HCT116 (cell line): ENCODE measurements at regions of chr20 and their contacts with region 1.

Region 1: GRCh38 chr20:49690899-49691620 is 22.6 kb downstream of the B4GALT5 start:
- DNase-seq: peak; percentile 73
- ATAC-seq: peak; percentile 77
- H3K4me3 ChIP-seq: no peak overlapping the region; a peak in 1 of 4 replicates
- H3K27ac ChIP-seq: peak overlapping the region; percentile 71
- H3K4me1 ChIP-seq: peaks cover 98 to 99% of the 10 kb centered on the region in 2 experiments
- H3K27me3 ChIP-seq: no peaks in the 10 kb centered on the region
- CTCF ChIP-seq: no peak
- POLR2A ChIP-seq: no peak
- RAD21 ChIP-seq: no peak

Region 2: DNA sequence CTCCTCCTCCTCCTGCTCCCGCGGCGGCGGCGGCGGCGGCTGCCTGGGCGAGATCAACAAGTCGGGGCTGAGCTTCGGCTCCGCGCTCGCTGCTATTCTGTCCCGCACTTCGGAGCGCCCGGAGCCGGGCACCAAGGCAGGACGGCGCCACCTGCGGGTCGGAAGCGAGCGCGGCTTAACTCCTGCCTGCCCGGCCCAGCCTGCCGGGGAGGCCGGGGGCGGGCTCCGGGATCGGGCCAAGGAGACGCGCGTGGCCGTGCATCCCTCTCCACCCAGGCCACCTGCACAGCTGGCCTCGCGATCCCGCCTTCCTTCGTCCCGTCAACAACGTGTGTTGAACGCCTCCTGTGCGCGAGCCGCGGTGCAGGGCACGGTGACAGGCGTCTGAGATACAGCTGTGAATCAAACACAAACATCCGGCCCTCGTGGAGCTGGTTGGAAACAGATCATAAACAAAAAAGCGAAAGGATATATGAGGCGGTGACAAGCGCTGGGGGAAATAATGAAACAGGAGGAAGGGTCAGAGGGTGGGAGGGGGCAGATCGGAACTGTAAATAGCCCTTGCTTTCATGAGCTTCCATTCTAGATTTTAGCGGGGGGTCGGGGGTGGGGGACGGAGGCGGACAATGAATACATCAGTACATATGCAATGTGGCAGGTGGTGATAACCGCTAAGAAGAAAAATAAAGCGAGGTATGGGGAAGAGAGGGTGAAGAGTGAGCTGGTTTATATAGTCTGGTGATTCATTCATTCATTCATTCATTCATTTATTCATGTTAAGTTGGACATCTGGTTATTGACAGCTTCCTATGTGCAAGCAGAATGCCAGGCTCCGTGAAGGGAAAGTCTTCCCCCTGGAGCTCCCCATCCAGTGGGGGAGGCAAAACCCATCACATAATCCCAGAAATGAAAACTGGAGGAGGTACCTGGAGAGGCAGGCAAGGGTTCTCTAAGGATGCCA is 206.6 kb before region 1 on chr20:
- CTCF ChIA-PET with region 1: no interaction called
- POLR2A ChIA-PET with region 1: no interaction called
- RAD21 ChIA-PET with region 1: no interaction called
- intact Hi-C with region 1: no loop called
- DNase-seq: peak; percentile 31
- ATAC-seq: peak; percentile 98
- H3K4me3 ChIP-seq: peak overlapping the region; percentile 32 to 56
- H3K27ac ChIP-seq: no peak overlapping the region
- H3K4me1 ChIP-seq: peaks cover 0 to 10% of the 10 kb centered on the region in 2 experiments; a peak in 1 of 4 replicates
- H3K27me3 ChIP-seq: peaks cover 24% of the 10 kb centered on the region; the same call in 1 of the 2 replicates
- CTCF ChIP-seq: peak; percentile 61 to 86 (median 81)
- POLR2A ChIP-seq: no peak
- RAD21 ChIP-seq: peak; percentile 79

Region 3: GRCh38 chr20:49676581-49677291 is 14.3 kb before region 1 on chr20:
- CTCF ChIA-PET with region 1: interaction called, 5 read pairs
- POLR2A ChIA-PET with region 1: interaction called, 11 read pairs
- RAD21 ChIA-PET with region 1: interaction called in 1 of 2 experiments, 3 read pairs
- intact Hi-C with region 1: no loop called
- DNase-seq: no peak
- ATAC-seq: peak; percentile 43
- H3K4me3 ChIP-seq: peak overlapping the region in 1 of 2 experiments; percentile 49; a peak in 3 of 4 replicates
- H3K27ac ChIP-seq: peak overlapping the region; percentile 90
- H3K4me1 ChIP-seq: peaks cover 85 to 95% of the 10 kb centered on the region in 2 experiments
- H3K27me3 ChIP-seq: no peaks in the 10 kb centered on the region
- CTCF ChIP-seq: no peak
- POLR2A ChIP-seq: no peak
- RAD21 ChIP-seq: no peak

Region 4: DNA sequence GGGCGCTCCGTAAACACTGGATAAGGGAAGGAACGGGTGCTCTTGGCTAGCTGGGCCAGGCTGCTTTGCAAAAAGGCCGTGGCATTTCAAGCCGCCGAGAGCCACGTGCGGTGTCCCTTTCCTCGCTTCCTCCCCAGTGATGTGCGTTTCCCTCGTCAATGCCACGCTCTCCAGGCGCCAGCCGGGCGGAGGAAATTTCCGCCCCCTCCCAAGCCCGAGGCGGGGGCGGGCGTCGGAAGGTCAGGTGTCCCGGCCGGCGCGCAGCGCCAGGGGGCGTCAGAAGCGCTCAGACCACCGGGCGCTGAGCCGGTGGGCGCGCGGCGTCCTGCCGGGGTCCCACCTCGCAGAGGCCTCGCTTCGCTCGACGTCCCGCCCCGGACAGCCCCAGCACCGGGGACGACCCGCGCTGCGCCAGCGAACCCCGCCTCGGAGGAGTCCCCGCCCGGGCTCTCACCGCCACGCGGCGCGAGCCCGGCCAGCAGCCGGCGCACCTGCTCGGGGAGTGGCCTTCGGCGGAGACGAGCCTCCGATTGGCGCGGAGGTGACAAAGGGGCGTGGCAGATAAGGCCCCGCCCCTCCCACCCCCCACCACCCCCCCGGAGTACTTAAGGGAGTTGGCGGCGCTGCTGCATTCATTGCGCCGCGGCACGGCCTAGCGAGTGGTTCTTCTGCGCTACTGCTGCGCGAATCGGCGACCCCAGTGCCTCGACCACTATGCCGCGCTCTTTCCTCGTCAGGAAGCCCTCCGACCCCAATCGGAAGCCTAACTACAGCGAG is 291.5 kb after region 1 on chr20 and contains the start of gene SNAI1:
- CTCF ChIA-PET with region 1: no interaction called
- POLR2A ChIA-PET with region 1: no interaction called
- RAD21 ChIA-PET with region 1: no interaction called
- intact Hi-C with region 1: no loop called
- DNase-seq: peak; percentile 66
- ATAC-seq: peak; percentile 83
- H3K4me3 ChIP-seq: peak within 1 kb of the TSS; percentile 69 to 100
- H3K27ac ChIP-seq: peak within 1 kb of the TSS; percentile 86
- H3K4me1 ChIP-seq: peaks cover 12 to 62% of the 10 kb centered on the region in 2 experiments
- H3K27me3 ChIP-seq: no peaks in the 10 kb centered on the region
- CTCF ChIP-seq: peak; percentile 35 to 62 (median 56); a peak in 5 of 6 replicates
- POLR2A ChIP-seq: peak; percentile 99
- RAD21 ChIP-seq: peak; percentile 41
- total RNA-seq, gene SNAI1: 13.4 TPM